Prostate gland (tissue), 2 donors: ENCODE measurements at regions of chr4 and their contacts with region 1.

Region 1: DNA sequence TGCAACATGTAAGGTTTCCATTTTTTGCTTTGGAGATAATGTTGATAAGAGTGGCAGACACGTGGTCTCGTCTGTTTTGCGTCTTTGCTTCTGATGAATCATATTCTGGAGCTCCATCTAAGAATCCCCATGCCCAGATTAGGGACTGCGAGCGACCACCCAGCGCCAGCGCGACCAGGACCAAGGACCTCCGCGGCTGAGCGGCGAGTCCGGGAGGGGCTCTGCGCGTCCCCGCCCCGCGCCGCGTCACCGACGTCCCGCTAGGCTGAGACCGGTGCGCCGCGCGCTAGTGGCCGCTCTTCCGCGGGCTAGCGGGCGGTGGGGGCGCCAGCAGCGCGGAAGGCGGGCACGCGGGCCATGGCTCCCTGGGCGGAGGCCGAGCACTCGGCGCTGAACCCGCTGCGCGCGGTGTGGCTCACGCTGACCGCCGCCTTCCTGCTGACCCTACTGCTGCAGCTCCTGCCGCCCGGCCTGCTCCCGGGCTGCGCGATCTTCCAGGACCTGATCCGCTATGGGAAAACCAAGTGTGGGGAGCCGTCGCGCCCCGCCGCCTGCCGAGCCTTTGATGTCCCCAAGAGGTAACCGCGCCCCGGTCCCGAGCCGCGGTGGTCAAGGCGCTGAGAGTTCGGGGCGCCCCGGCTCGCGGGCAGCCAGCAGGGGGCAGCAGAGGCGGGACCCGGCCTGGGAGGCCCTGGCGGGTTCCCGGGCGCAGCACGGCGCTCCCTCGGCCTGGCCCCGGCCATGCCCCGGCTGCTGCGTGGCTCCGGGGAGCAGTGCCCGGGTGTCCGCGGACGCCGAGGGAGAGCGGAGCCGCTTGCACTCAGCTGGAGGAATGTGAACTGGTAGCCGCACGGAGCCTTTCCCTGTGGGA is at the start of gene SRD5A3:
- DNase-seq: peak; percentile 78
- H3K4me3 ChIP-seq: peak within 1 kb of the TSS; percentile 69 to 74
- H3K27ac ChIP-seq: peak within 1 kb of the TSS; percentile 93
- H3K4me1 ChIP-seq: peaks cover 5% of the 10 kb centered on the region
- H3K27me3 ChIP-seq: no peaks in the 10 kb centered on the region
- CTCF ChIP-seq: peak; percentile 92 to 97 (median 96)
- POLR2A ChIP-seq: peak; percentile 28
- total RNA-seq, gene SRD5A3: 6.6 to 14.8 TPM

Region 2: GRCh38 chr4:55395529-55396307 is 49.5 kb after region 1 on chr4 and contains the start of gene TMEM165:
- intact Hi-C with region 1: loop called (anchors 1 kb)
- DNase-seq: peak; percentile 96
- H3K4me3 ChIP-seq: peak within 1 kb of the TSS; percentile 86 to 98
- H3K27ac ChIP-seq: peak within 1 kb of the TSS; percentile 96 to 97
- H3K4me1 ChIP-seq: no peaks in the 10 kb centered on the region
- H3K27me3 ChIP-seq: no peaks in the 10 kb centered on the region
- CTCF ChIP-seq: peak in 1 of 4 experiments; percentile 19
- POLR2A ChIP-seq: peak; percentile 99
- total RNA-seq, gene TMEM165: 117 to 183 TPM

Region 3: DNA sequence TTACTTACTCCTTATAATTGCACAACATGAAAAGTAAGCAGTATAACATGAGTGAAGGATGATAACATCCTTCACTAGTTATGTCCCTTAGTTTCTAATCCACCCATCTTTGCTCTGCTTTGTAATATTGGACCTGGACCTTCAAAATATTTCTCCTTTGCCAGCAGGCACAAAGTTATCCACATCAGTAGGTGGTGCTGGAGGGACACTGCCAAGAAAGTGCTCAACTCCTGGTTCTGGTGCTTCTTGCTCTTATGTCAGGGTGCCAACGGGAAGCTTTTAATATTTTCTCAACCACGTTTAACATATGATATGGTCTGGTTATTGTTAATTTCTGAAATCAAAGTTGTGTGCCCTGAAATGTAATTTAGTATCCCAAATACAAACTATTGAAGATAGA is 98.6 kb after region 1 on chr4:
- intact Hi-C with region 1: loop called (anchors 10 kb)
- DNase-seq: no peak
- H3K4me3 ChIP-seq: no peak overlapping the region
- H3K27ac ChIP-seq: no peak overlapping the region
- H3K4me1 ChIP-seq: no peaks in the 10 kb centered on the region
- H3K27me3 ChIP-seq: no peaks in the 10 kb centered on the region
- CTCF ChIP-seq: peak in 1 of 4 experiments; percentile 29
- POLR2A ChIP-seq: no peak

Region 4: DNA sequence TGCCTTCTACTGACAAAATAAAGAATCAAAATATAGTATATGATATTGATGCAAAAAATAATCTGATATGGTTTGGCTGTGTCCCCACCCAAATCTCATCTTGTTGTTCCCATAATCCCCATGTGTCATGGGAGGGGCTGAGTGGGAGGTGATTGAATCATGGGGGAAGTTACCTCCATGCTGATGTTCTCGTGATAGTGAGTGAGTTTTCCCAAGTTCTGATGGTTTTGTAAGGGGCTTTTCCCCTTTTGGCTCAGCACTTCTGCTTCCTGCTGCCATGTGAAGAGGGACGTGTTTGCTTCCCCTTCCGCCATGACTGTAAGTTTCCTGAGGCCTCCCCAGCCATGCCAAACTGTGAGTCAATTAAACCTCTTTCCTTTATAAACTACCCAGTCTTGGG is 119.8 kb after region 1 on chr4:
- intact Hi-C with region 1: no loop called
- DNase-seq: no peak
- H3K4me3 ChIP-seq: no peak overlapping the region
- H3K27ac ChIP-seq: no peak overlapping the region
- H3K4me1 ChIP-seq: no peaks in the 10 kb centered on the region
- H3K27me3 ChIP-seq: no peaks in the 10 kb centered on the region
- CTCF ChIP-seq: no peak
- POLR2A ChIP-seq: no peak

Region 5: DNA sequence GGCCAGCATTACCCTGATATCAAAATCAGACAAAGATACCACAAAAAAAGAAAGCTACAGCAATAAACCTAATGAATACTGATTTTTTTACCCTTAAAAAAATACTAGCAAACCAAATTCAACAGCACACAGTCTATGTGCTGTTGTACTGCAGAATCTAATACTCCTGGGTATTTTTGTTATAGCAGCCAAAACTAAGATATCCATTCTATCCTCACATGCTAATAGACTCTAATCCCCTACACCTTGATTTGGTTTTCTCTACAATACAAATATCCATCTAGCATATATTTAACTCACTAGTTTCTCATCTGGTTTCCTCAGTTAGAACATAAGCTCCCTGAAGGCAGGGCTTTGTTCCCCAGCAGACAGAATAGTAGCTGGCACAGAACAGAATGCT is 188.1 kb after region 1 on chr4:
- intact Hi-C with region 1: no loop called
- DNase-seq: no peak
- H3K4me3 ChIP-seq: no peak overlapping the region
- H3K27ac ChIP-seq: no peak overlapping the region
- H3K4me1 ChIP-seq: peaks cover 3% of the 10 kb centered on the region
- H3K27me3 ChIP-seq: no peaks in the 10 kb centered on the region
- CTCF ChIP-seq: no peak
- POLR2A ChIP-seq: no peak

Region 6: DNA sequence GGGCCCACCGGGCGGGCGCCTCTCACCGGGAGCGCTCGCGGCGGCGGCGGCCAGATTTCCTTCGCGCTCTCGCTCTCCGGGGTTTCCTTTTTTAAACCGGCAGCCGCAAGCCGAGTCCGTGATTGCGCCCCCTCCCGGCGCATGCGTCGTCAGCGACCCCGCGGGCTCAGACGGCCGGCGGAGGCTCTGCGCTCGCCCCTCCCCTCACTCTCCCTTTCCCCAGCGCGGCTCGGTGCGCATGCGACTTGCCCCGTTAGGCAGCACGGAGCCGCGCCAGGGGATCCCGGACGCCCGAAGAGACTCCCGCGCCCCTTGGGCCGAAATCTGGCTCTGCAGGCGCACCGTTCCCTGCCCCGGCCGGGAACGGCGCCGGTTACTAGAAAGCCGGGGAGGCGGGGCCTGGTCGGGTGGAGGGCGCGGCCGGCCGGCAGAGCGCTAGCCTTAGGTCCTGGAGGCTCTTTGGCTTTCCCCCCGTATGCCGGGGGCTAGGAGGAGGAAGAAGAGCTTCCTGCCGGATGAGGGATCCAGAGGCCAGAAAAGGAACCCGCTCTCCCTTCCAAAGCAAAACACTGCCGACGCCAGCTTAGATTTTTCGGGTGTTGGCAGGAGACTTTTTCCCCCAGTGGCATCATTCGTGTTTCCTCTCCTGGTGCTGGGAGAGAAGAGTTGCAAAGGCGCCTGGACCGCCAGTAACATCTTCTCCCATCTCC is 200.7 kb after region 1 on chr4 and contains the start of gene CLOCK:
- intact Hi-C with region 1: loop called (anchors 2 kb)
- DNase-seq: peak; percentile 74
- H3K4me3 ChIP-seq: peak within 1 kb of the TSS; percentile 72 to 92
- H3K27ac ChIP-seq: peak within 1 kb of the TSS; percentile 96 to 99
- H3K4me1 ChIP-seq: peaks cover 3% of the 10 kb centered on the region
- H3K27me3 ChIP-seq: no peaks in the 10 kb centered on the region
- CTCF ChIP-seq: peak in 3 of 4 experiments; percentile 57 to 75 (median 71)
- POLR2A ChIP-seq: peak; percentile 52
- total RNA-seq, gene CLOCK: 19.5 to 25.4 TPM

Region 7: DNA sequence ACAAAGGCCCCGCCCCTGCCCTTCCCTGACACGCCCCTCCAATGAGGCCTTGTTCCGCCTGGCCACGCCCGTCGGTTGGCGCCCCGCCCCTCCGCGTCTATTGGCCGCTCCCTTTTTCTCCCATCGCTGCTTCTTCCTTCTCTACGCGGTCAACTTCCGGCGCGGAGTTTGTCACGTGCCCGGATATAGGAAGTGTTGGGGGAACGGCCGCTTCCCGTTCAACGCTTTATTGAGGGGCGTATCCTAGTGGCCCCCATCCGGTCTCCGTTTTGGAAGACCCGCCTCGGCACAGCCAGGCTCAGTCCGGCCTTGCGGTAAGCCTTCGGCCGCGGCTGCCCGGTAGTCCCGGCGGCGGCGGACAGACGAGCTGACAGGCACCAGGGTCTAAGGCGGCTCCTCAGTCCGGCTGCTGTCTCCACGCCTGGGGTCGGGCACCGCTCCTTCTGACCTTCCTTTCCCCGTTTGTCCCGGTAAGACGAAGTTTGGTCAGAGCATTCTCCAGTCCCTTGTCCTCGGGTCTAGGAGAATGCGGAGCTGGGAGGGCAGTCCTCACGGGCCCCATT is 507.4 kb after region 1 on chr4 and contains the start of gene EXOC1:
- intact Hi-C with region 1: loop called (anchors 10 kb)
- DNase-seq: peak; percentile 96
- H3K4me3 ChIP-seq: peak within 1 kb of the TSS; percentile 64 to 89
- H3K27ac ChIP-seq: peak within 1 kb of the TSS; percentile 30 to 49
- H3K4me1 ChIP-seq: no peaks in the 10 kb centered on the region
- H3K27me3 ChIP-seq: no peaks in the 10 kb centered on the region
- CTCF ChIP-seq: peak in 1 of 4 experiments; percentile 22
- POLR2A ChIP-seq: peak; percentile 35
- total RNA-seq, gene EXOC1: 24.8 to 39.4 TPM